Endothelial cell of umbilical vein (primary cell): ENCODE measurements at regions of chr6 and their contacts with region 1.

Region 1: DNA sequence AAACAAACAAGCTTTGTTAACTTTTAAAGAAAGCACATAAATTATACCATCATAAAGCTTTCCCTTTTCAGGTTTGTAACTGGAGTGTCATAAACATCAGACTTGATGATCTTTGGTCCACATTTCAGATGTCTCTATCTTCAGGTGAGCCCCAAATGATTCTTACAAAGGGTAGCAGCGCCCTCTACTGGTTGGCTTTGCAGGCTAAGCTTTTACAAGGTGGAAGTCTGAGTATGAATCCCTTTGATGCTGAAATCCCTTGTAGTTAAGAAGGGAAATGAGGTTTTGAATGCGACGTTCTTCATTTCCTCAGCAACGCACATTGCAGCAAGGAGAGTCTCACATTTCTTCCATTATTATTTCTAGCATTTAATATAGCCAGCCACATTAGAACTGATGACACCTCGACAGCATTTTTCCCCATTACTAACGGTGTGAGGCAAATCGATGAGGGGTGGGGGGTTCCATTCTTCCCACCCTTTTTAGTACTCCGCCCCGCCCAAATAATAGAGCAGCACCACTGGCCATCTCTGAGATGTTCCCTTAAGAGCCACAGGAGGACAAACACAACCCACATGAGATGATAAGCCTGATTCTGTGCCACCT is 126.3 kb upstream of the NT5E start:
- DNase-seq: peak; percentile 80
- H3K4me3 ChIP-seq: no peak overlapping the region
- H3K27ac ChIP-seq: no peak overlapping the region
- H3K4me1 ChIP-seq: no peaks in the 10 kb centered on the region
- H3K27me3 ChIP-seq: peaks cover 3 to 4% of the 10 kb centered on the region in 2 experiments
- CTCF ChIP-seq: peak; percentile 74 to 83
- POLR2A ChIP-seq: no peak

Region 2: DNA sequence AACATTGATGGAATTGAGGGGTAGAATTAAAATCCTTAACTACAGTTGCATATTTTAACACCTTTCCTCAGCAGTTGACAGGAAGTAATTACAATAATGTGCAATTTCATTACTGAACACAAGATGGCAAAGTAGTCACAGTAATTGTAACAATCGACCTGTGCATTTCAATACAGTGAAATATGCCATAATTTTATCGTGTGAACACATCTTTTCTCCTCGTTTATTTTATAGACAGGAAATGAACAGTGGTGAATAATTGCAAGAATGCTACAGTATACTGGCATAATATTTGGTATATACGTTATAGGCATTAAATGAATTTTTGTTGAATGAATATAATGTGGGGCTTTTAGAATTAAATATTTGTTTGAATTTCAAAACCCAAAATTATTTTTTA is 1439.0 kb before region 1 on chr6:
- CTCF ChIA-PET with region 1: interaction called, 5 read pairs
- POLR2A ChIA-PET with region 1: no interaction called
- dilution Hi-C with region 1: no loop called
- intact Hi-C with region 1: loop called (anchors 10 kb)
- DNase-seq: peak; percentile 84
- H3K4me3 ChIP-seq: no peak overlapping the region
- H3K27ac ChIP-seq: no peak overlapping the region
- H3K4me1 ChIP-seq: peaks cover 9% of the 10 kb centered on the region
- H3K27me3 ChIP-seq: no peaks in the 10 kb centered on the region
- CTCF ChIP-seq: peak; percentile 41 to 59
- POLR2A ChIP-seq: no peak

Region 3: GRCh38 chr6:84243240-84243639 is 1080.3 kb before region 1 on chr6:
- CTCF ChIA-PET with region 1: interaction called, 10 read pairs
- POLR2A ChIA-PET with region 1: no interaction called
- dilution Hi-C with region 1: no loop called
- intact Hi-C with region 1: no loop called
- DNase-seq: no peak
- H3K4me3 ChIP-seq: no peak overlapping the region
- H3K27ac ChIP-seq: no peak overlapping the region
- H3K4me1 ChIP-seq: no peaks in the 10 kb centered on the region
- H3K27me3 ChIP-seq: peaks cover 1 to 2% of the 10 kb centered on the region in 2 experiments
- CTCF ChIP-seq: no peak
- POLR2A ChIP-seq: no peak

Region 4: GRCh38 chr6:84428300-84428907 is 895.1 kb before region 1 on chr6:
- CTCF ChIA-PET with region 1: interaction called, 15 read pairs
- POLR2A ChIA-PET with region 1: no interaction called
- dilution Hi-C with region 1: no loop called
- intact Hi-C with region 1: no loop called
- DNase-seq: peak; percentile 82
- H3K4me3 ChIP-seq: no peak overlapping the region
- H3K27ac ChIP-seq: no peak overlapping the region
- H3K4me1 ChIP-seq: no peaks in the 10 kb centered on the region
- H3K27me3 ChIP-seq: no peaks in the 10 kb centered on the region
- CTCF ChIP-seq: peak; percentile 86 to 88
- POLR2A ChIP-seq: no peak

Region 5: DNA sequence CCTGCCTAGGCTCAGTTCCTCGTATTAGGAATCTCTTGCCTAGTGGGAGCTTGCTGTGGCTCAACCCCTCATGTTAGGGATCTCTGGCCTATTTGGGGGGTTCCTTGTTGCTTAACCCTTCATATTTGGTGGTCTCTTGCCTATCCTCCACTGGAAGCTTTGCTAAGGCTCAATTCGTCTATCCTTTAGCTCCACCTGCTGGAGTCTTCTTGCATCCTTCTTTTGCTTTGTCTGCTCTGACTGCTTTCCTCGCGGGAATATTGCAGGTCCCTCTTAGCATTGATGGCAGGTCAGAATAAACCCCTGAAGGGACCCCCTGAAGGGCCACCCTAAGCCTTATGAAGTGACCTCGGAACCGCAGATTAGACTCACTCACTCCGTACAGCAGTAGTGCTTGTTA is 356.1 kb before region 1 on chr6:
- CTCF ChIA-PET with region 1: interaction called, 4 read pairs
- POLR2A ChIA-PET with region 1: no interaction called
- dilution Hi-C with region 1: no loop called
- intact Hi-C with region 1: loop called (anchors 1 kb)
- DNase-seq: peak; percentile 75
- H3K4me3 ChIP-seq: no peak overlapping the region
- H3K27ac ChIP-seq: no peak overlapping the region
- H3K4me1 ChIP-seq: no peaks in the 10 kb centered on the region
- H3K27me3 ChIP-seq: no peaks in the 10 kb centered on the region
- CTCF ChIP-seq: peak; percentile 52 to 62
- POLR2A ChIP-seq: no peak

Region 6: DNA sequence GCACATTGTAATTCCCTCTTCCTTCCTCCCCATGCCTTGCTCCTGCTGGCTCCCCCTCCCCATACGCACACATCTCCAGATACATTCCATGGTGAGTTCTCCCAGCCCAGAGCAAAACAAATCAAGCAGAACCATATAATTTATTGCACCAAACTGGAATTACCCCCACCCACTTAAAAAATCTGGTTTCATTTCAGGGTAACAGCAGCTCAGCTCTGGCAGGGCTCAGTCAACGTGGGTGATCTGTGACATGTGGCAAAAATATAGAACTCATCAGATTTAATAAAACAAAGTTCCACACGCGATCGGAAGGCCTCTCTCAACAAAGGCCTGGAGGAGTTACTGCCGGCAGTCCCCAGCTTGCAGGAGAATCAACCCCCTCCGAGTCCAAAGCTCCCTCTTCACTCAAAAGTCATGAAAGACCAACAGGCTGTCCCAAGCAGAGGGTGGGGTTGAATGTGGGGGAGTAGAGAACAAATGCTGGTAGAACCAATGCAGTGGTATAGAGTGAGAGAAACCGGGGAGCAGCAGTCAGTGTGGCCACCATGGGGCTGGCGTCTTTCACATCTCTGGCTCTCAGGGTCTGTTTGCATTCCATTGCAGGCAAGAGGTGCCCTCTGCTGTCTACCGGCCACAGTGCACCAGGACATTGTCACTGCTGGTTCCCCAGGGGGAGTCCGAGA is 196.9 kb before region 1 on chr6:
- CTCF ChIA-PET with region 1: interaction called, 9 read pairs
- POLR2A ChIA-PET with region 1: no interaction called
- dilution Hi-C with region 1: no loop called
- intact Hi-C with region 1: loop called (anchors 2 kb)
- DNase-seq: peak; percentile 75
- H3K4me3 ChIP-seq: no peak overlapping the region
- H3K27ac ChIP-seq: no peak overlapping the region
- H3K4me1 ChIP-seq: no peaks in the 10 kb centered on the region
- H3K27me3 ChIP-seq: peaks cover 14 to 17% of the 10 kb centered on the region in 2 experiments
- CTCF ChIP-seq: peak; percentile 72 to 89
- POLR2A ChIP-seq: no peak

Region 7: DNA sequence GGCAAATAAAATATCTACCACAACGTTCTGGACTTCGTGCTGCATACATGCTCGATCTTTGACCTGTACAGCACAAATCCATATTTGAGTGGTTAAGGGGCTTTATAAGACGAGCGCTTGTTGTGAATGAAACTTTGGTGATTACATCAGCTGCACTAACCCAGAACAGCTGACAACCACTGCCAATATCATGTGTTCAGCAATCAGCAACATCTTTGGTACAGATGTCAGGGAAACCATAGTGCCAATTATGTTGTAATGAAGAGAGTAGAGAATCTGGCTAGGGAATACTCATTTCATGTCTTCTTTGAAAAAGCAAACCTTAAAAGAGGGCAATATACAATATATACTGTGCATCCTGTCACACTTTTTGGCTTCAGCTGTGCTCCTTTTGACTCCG is 62.3 kb before region 1 on chr6:
- CTCF ChIA-PET with region 1: no interaction called
- POLR2A ChIA-PET with region 1: no interaction called
- dilution Hi-C with region 1: no loop called
- intact Hi-C with region 1: no loop called
- DNase-seq: no peak
- H3K4me3 ChIP-seq: no peak overlapping the region
- H3K27ac ChIP-seq: no peak overlapping the region
- H3K4me1 ChIP-seq: no peaks in the 10 kb centered on the region
- H3K27me3 ChIP-seq: peaks cover 3 to 7% of the 10 kb centered on the region in 2 experiments
- CTCF ChIP-seq: no peak
- POLR2A ChIP-seq: no peak

Region 8: GRCh38 chr6:85537055-85537494 is 213.5 kb after region 1 on chr6:
- CTCF ChIA-PET with region 1: interaction called, 12 read pairs
- POLR2A ChIA-PET with region 1: no interaction called
- dilution Hi-C with region 1: no loop called
- intact Hi-C with region 1: no loop called
- DNase-seq: peak; percentile 32
- H3K4me3 ChIP-seq: no peak overlapping the region
- H3K27ac ChIP-seq: no peak overlapping the region
- H3K4me1 ChIP-seq: no peaks in the 10 kb centered on the region
- H3K27me3 ChIP-seq: no peaks in the 10 kb centered on the region
- CTCF ChIP-seq: peak in 1 of 2 donors; percentile 34
- POLR2A ChIP-seq: no peak